ENCODE measurements at regions of chr11 and their contacts with region 1.

Region 1: DNA sequence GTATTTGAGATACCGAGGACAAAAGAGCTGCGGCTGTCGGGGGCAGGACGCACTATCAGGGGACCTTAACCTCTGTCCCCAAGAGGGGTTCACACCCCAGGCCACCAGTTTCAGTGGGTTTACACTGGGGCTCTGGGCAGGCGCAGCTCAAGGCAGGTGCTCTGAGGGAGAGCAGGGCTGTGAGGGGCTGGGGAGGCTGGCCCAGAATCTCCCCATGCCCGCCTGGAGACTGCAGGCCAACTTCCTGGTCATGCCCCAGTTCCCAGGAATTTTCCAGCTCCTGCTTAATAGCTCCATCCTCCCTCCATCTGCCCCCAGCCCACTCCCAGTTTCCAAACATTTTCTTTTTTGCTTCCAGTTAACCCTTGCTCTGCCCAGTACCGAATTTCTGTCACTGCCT is 7.6 kb upstream of the PGA3 start:
- DNase-seq: no peak
- CTCF ChIP-seq: no peak

Region 2: GRCh38 chr11:61266602-61267001 is 70.9 kb after region 1 on chr11:
- in situ Hi-C with region 1: loop called (anchors 5 kb)
- DNase-seq: no peak
- CTCF ChIP-seq: no peak

Region 3: GRCh38 chr11:61509043-61510029 is 313.6 kb after region 1 on chr11:
- in situ Hi-C with region 1: no loop called
- DNase-seq: peak; percentile 92
- CTCF ChIP-seq: peak; percentile 50

Measured in GM13977 (cell line).